Activated CD4-positive, alpha-beta T cell treated with anti-CD3 and anti-CD28 coated beads for 36 hours (primary cell): ENCODE measurements at regions of chr11 and their contacts with region 1.

Region 1: GRCh38 chr11:111878849-111879636 is at the starts of genes CFAP68 and FDXACB1:
- DNase-seq: peak; percentile 97
- ATAC-seq: peak; percentile 92
- H3K4me3 Mint-ChIP-seq: peak within 1 kb of the TSS; percentile 78
- H3K27ac Mint-ChIP-seq: peak within 1 kb of the TSS; percentile 96
- H3K4me1 Mint-ChIP-seq: peaks cover 26% of the 10 kb centered on the region
- H3K27me3 Mint-ChIP-seq: no peaks in the 10 kb centered on the region
- total RNA-seq, gene CFAP68: 32.1 to 49.7 TPM
- total RNA-seq, gene FDXACB1: 5.9 to 6.0 TPM

Region 2: GRCh38 chr11:111932611-111932950 is 53.5 kb after region 1 on chr11:
- CTCF ChIA-PET with region 1: interaction called, 5 read pairs
- POLR2A ChIA-PET with region 1: interaction called, 3 read pairs
- intact Hi-C with region 1: loop called (anchors 1 kb)
- DNase-seq: no peak
- ATAC-seq: peak; percentile 73
- H3K4me3 Mint-ChIP-seq: peak overlapping the region; percentile 28
- H3K27ac Mint-ChIP-seq: peak overlapping the region; percentile 88
- H3K4me1 Mint-ChIP-seq: peaks cover 40% of the 10 kb centered on the region
- H3K27me3 Mint-ChIP-seq: no peaks in the 10 kb centered on the region

Region 3: GRCh38 chr11:112024773-112025678 is 146.0 kb after region 1 on chr11 and contains the start of gene DLAT:
- CTCF ChIA-PET with region 1: interaction called, 5 read pairs
- POLR2A ChIA-PET with region 1: no interaction called
- intact Hi-C with region 1: loop called (anchors 1 to 2 kb)
- DNase-seq: peak; percentile 93
- ATAC-seq: peak; percentile 90
- H3K4me3 Mint-ChIP-seq: peak within 1 kb of the TSS; percentile 96
- H3K27ac Mint-ChIP-seq: peak within 1 kb of the TSS; percentile 100
- H3K4me1 Mint-ChIP-seq: peaks cover 19% of the 10 kb centered on the region
- H3K27me3 Mint-ChIP-seq: no peaks in the 10 kb centered on the region
- total RNA-seq, gene DLAT: 47.8 to 49.1 TPM

Region 4: DNA sequence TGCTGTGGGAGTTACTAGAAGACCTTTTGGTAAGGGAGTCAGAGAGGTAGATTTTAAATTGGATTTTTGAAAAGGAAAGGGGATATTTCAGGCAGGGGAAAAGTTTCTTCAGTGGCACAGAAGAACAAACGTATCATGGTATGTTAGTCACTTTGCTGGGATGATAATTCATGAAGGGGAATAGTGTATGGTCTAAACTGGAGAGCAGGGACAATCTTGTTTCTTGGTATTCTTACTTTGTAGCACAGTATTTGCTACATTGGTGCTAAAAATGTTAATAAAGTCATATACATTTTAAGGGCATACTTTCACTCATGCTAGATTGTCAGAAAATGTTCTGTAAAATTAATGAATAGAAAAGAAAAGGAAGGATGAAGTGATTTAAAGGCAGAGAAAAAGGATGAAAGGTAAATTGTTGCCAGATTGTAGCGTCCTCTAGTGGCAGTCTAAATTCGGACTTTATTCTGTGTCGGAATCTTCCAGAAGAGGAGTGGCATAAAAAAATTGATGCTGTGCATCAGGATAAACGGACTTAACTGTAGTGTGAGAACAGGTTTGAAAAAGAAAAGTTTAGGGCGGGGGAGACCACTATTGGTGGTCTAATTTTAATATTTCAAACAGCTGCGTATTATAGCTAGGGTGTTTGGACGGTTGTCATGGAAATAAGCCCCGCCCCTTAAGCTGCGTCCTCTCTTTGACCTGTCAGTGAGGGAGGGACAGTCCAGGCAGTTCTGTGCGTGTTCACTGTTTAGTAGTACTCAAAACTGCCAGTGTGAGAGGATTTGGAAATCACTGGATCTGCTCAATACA is 296.0 kb after region 1 on chr11 and contains the start of gene BCO2:
- CTCF ChIA-PET with region 1: no interaction called
- POLR2A ChIA-PET with region 1: no interaction called
- intact Hi-C with region 1: loop called (anchors 1 to 10 kb)
- DNase-seq: peak; percentile 70
- ATAC-seq: peak; percentile 81
- H3K4me3 Mint-ChIP-seq: peak within 1 kb of the TSS; percentile 54
- H3K27ac Mint-ChIP-seq: no peak within 1 kb of the TSS
- H3K4me1 Mint-ChIP-seq: peaks cover 11% of the 10 kb centered on the region
- H3K27me3 Mint-ChIP-seq: peaks cover 22% of the 10 kb centered on the region
- total RNA-seq, gene BCO2: 0.63 to 0.75 TPM